ENCODE measurements at regions of chr14 and their contacts with region 1.

Region 1: DNA sequence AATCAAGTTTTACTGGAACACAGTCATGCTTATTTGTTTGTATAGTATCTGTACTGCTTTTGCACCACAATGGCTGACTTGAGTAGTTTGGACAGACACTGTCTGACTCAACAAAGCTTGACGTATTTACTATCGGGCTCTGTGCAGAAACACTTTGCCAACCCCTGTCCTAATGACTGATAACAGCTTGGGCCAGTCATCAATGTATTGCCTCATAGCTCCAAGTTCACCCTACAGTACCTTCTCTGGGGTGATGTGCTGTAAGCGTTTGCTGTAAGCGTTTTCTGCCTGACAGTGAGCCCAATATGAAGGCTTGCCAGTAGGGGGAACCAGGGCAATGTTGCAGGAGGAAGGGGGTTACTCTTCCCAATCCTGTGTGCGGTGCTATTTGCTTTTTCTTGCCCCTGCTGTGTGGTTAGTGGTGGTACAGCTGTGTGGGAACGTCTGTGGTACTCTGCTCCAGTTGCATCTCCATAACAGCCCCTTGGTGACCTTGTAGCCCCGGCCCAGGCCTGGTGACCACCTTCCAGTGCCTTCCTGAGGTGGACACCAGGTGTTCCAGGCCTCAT is 5.4 kb upstream of the CCDC177 start:
- DNase-seq: peak; percentile 96
- ATAC-seq: peak; percentile 87
- H3K4me3 ChIP-seq: no peak overlapping the region
- H3K27ac ChIP-seq: no peak overlapping the region
- H3K4me1 ChIP-seq: no peaks in the 10 kb centered on the region
- H3K27me3 ChIP-seq: peaks cover 18% of the 10 kb centered on the region
- CTCF ChIP-seq: peak; percentile 76
- POLR2A ChIP-seq: no peak
- RAD21 ChIP-seq: peak; percentile 58

Region 2: DNA sequence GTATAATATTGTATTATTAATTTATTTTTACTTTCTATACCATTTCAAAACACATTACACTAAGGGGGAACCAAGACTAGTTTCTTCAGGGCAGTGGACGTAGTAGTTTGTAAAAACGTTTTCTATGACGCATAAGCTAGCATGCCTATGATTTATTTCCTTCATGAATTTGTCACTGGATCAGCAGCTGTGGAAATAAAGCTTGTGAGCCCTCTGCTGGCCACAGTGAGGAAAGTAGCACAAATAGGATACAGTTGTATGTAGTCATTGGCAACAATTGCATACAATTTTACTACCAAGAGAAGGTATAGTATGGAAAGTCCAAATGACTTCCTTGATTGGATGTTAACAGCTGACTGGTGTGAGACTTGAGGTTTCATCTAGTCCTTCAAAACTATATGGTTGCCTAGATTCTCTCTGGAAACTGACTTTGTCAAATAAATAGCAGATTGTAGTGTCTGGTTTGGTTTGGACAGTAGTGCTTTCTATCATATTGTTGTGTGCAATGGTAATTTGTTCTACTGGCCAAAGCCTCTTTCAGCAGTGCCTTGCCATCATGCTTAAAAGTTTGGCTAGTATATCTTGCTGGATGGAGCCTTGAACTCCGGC is 119.9 kb before region 1 on chr14:
- CTCF ChIA-PET with region 1: no interaction called
- POLR2A ChIA-PET with region 1: no interaction called
- dilution Hi-C with region 1: no loop called
- in situ Hi-C with region 1: no loop called
- intact Hi-C with region 1: no loop called
- DNase-seq: peak; percentile 95
- ATAC-seq: peak; percentile 75
- H3K4me3 ChIP-seq: no peak overlapping the region
- H3K27ac ChIP-seq: no peak overlapping the region
- H3K4me1 ChIP-seq: 0 out of 2 replicates have a peak, but pooled peaks cover 2% of the 10 kb centered on the region
- H3K27me3 ChIP-seq: no peaks in the 10 kb centered on the region
- CTCF ChIP-seq: peak; percentile 86
- POLR2A ChIP-seq: no peak
- RAD21 ChIP-seq: peak; percentile 84

Region 3: DNA sequence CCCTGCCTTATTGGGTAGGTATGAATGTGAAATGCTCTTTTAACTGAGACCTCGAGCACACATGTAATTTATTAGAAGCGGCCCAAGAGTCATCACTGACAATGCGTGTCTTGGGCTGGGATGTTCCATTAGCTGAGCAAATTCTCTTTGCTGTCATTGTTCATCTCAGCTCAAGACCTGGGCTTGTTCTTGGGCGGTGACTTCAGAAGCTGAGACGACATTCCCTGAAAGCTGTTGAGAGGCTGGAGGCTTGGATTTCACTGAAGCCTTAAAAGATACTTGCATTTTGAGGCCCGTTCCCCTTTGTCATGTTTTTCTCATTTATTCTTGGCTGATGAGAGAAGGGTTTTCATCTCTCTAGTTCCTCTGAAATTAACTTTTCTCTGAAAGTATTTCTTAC is 14.7 kb after region 1 on chr14:
- CTCF ChIA-PET with region 1: interaction called, 14 read pairs
- POLR2A ChIA-PET with region 1: no interaction called
- dilution Hi-C with region 1: no loop called
- in situ Hi-C with region 1: no loop called
- intact Hi-C with region 1: no loop called
- DNase-seq: no peak
- ATAC-seq: no peak
- H3K4me3 ChIP-seq: no peak overlapping the region
- H3K27ac ChIP-seq: no peak overlapping the region
- H3K4me1 ChIP-seq: peaks cover 6% of the 10 kb centered on the region; the same call in 1 of the 2 replicates
- H3K27me3 ChIP-seq: no peaks in the 10 kb centered on the region
- CTCF ChIP-seq: no peak
- POLR2A ChIP-seq: no peak
- RAD21 ChIP-seq: no peak

Region 4: DNA sequence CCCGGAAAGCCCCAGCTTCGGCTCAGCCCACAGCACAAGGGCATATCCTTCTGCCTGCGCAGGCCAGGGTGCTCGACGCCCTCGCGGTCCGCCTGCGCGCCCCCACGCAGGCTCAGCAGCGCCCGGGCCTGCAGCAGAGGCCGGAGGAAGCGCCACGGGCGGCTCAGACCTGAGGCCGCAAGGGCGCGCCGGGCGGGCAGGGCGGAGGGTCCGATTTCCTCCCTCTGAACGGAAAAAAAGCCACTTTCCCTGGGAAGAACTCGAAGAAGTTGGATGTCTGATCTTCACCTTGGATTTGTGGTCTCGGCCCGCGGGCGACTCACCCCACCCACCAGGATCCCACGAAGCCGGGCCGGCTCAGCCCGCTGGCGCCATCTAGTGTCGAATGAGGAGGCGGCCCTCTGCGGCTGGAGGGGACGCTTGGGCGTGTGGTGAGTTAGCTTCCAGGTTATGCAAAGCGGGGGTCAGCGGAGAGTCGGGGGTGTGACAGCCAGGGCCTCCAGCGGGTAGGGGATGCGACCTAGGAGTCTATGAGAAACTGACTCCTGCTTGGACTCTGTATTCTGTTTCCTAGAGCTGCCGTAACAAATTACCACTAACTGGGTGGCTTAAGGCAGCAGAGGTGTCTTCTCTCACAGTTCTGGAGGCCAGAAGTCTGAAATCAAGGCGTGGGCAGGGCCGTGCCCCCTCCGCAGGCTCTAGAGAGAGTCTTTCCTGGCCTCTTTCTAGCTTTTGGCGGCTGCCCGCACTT is 146.8 kb after region 1 on chr14:
- CTCF ChIA-PET with region 1: interaction called, 9 read pairs
- POLR2A ChIA-PET with region 1: no interaction called
- dilution Hi-C with region 1: no loop called
- in situ Hi-C with region 1: loop called (anchors 5 kb)
- intact Hi-C with region 1: loop called (anchors 1 kb)
- DNase-seq: peak; percentile 58
- ATAC-seq: peak; percentile 97
- H3K4me3 ChIP-seq: peak overlapping the region; percentile 57
- H3K27ac ChIP-seq: peak overlapping the region; percentile 46
- H3K4me1 ChIP-seq: peaks cover 2% of the 10 kb centered on the region
- H3K27me3 ChIP-seq: no peaks in the 10 kb centered on the region
- CTCF ChIP-seq: peak; percentile 92
- POLR2A ChIP-seq: peak; percentile 67
- RAD21 ChIP-seq: peak; percentile 97

Region 5: DNA sequence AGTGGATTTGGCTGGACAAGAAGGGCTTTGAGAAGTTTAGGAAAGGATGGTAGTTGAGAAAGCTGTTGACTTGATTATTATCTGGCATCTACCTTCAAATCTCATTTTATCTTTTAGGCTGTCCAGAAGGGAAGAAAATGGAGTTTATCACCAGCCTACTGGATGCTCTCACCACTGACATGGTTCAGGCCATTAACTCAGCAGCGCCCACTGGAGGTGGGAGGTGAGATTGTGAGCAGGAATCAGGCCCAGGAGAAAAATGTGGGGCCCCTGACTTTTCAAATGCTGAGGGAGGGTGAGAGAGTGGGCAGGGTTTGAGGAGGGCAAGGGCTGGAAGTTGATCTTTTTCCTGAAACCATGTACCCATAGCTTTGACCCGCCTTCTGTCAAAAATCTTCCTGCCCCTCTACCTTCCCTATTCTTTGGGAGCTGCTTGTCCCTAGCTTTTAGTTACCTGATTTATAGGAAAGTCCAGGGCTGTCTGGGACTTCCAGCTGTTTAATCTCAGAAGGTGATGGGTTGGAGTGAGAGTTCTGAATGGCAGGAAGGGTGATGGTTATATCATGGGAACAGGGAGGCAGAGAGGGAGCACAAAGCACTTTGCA is 433.3 kb after region 1 on chr14:
- CTCF ChIA-PET with region 1: no interaction called
- POLR2A ChIA-PET with region 1: no interaction called
- dilution Hi-C with region 1: no loop called
- in situ Hi-C with region 1: loop called (anchors 25 kb)
- intact Hi-C with region 1: no loop called
- DNase-seq: peak; percentile 30
- ATAC-seq: peak; percentile 61; the same call in 1 of the 2 replicates
- H3K4me3 ChIP-seq: no peak overlapping the region
- H3K27ac ChIP-seq: no peak overlapping the region
- H3K4me1 ChIP-seq: peaks cover 4% of the 10 kb centered on the region
- H3K27me3 ChIP-seq: no peaks in the 10 kb centered on the region
- CTCF ChIP-seq: peak; percentile 61
- POLR2A ChIP-seq: no peak
- RAD21 ChIP-seq: peak; percentile 70

Measured in IMR-90 (cell line).